OCI-LY7 (cell line): ENCODE measurements at regions of chr19 and their contacts with region 1.

Region 1: GRCh38 chr19:47483800-47484690 is at the start of gene KPTN:
- DNase-seq: peak; percentile 94
- H3K4me3 ChIP-seq: peak within 1 kb of the TSS; percentile 77
- H3K27ac ChIP-seq: peak within 1 kb of the TSS; percentile 91
- H3K4me1 ChIP-seq: peaks cover 40% of the 10 kb centered on the region
- CTCF ChIP-seq: peak; percentile 97
- total RNA-seq, gene KPTN: 13.8 and 14.0 TPM in 2 replicates

Region 2: DNA sequence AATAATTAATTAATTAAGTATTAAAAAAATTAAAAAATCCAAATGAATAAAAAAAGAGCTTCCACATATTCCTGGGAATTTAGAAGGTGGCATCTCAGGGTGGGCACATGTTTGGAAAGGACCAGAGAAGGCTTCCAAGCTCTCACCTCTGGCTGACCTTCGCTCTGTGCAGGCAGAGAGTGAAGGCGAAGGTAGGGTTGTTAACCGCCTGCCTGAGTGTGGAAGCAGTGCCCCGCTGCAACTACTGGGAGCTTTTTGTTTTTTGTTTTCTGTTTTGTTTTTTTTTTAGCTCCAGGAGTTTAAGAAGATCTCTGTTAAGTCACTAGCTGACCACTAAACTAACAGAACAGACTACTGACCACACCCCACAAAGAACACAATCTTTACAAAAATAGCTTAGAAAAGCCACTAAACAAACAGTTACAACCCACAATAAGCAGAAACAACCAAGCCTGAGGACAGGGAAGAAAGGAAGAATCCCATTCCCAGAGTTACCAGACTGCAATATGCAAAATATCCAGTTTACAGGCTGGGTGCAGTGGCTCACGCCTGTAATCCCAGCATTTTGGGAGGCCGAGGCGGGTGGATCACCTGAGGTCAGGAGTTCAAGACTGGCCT is 77.5 kb after region 1 on chr19:
- CTCF ChIA-PET with region 1: no interaction called
- POLR2A ChIA-PET with region 1: no interaction called
- intact Hi-C with region 1: loop called (anchors 2 kb)
- DNase-seq: no peak
- H3K4me3 ChIP-seq: no peak overlapping the region
- H3K27ac ChIP-seq: no peak overlapping the region
- H3K4me1 ChIP-seq: peaks cover 7% of the 10 kb centered on the region
- CTCF ChIP-seq: no peak

Region 3: DNA sequence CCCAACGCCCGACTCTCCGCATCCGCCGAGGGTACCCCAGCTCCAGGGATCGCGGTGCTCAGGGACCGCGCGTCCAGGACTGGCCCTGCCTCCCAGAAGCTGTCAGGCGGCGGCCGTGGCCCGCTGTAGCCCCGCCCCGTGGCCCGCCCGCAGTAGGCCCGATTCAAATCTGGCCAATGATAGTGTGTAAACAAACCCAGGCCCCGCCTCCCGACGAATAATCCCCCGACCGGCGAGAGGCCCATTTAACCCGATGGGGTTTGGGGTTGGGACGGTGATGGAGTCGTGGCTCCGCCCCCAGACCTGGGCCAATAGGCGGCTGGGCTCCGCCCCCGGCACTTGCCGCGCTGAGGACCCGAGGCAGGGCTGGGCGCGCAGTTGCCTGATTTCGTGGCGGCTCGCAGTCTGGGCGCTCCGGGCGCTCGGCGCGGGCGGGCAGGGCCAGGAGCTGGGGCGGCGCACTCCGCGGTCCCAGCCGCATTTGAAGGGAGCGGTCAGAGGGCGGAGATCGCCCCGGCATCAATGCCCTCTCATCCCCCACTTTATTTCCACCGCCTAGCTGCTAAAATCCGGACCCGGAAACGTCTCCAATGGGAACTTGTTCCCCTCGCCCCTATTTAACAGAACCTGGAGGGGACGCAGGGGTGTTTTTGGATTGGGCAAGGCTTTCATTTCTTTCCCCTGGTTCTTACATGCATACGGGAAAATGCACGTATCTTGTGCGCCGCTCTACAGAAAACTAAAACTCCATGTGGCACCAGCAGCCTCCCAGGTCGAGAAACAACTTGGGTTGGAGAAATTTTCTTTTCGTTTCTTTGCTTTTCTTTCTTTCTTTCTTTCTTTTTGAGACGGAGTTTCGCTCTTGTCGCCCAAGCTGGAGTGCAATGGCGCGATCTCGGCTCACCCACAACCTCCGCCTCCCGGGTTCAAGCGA is 116.5 kb after region 1 on chr19:
- CTCF ChIA-PET with region 1: no interaction called
- POLR2A ChIA-PET with region 1: interaction called, 3 read pairs
- intact Hi-C with region 1: loop called (anchors 10 kb)
- DNase-seq: peak; percentile 100
- H3K4me3 ChIP-seq: peak overlapping the region; percentile 72
- H3K27ac ChIP-seq: peak overlapping the region; percentile 59
- H3K4me1 ChIP-seq: peaks cover 28% of the 10 kb centered on the region
- CTCF ChIP-seq: no peak

Region 4: DNA sequence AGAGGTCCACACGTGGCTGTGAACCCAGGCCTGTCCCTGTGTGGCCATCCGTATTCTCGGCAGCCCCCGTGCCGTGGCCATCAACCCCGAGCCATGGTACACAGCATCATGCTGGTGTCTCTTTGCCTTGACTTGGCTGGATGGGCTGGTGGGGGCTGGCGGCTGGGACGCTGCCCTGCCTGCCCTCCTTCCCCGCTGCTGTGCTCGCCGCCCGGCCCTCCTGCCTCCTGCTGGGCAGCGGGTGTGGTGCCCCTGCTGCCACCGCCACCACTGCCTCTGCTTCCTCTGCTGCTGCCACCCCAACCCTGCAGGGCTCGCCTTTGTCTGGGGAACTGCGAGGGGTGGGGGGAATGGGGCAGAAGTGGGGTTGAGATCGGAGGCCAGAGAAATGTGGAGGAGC is 209.4 kb after region 1 on chr19:
- CTCF ChIA-PET with region 1: no interaction called
- POLR2A ChIA-PET with region 1: no interaction called
- intact Hi-C with region 1: no loop called
- DNase-seq: no peak
- H3K4me3 ChIP-seq: no peak overlapping the region
- H3K27ac ChIP-seq: no peak overlapping the region
- H3K4me1 ChIP-seq: peaks cover 5% of the 10 kb centered on the region
- CTCF ChIP-seq: no peak